Posterior vena cava (tissue), 2 donors: ENCODE measurements at regions of chr19 and their contacts with region 1.

Region 1: GRCh38 chr19:15354566-15355296 is 22.4 kb upstream of the BRD4 start:
- DNase-seq: no peak

Region 2: GRCh38 chr19:15210323-15210781 is 144.4 kb before region 1 on chr19:
- intact Hi-C with region 1: no loop called
- DNase-seq: peak; percentile 88

Region 3: DNA sequence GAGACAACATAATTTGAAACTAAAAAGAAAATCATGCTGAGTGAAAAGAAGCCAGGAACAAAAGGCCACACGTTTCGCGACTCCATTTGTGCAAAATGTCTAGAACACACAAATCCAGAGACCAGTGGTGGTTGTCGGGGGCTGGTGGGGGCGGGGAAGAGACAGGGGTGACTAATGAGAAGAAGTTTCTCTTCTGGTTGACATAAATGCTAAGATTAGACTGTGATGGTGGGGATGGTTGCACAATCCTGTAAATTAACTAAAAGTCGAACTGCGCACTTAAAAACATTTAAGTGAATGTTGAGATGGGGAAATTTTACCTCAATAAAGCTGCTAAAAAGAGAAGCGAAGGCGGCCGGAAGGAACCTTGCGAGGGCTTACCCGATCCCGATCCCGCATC is 17.7 kb after region 1 on chr19:
- intact Hi-C with region 1: loop called in 1 of 2 experiments (anchors 2 kb)
- DNase-seq: peak; percentile 5

Region 4: GRCh38 chr19:15404097-15404779 is 49.5 kb after region 1 on chr19:
- intact Hi-C with region 1: loop called in 1 of 2 experiments (anchors 2 kb)
- DNase-seq: peak; percentile 75